BJ (cell line): ENCODE measurements at regions of chr14 and their contacts with region 1.

Region 1: GRCh38 chr14:68816262-68816942 is 23.5 kb upstream of the ZFP36L1 start:
- DNase-seq: no peak
- H3K4me3 ChIP-seq: peak overlapping the region; percentile 41
- H3K27me3 ChIP-seq: no peaks in the 10 kb centered on the region
- CTCF ChIP-seq: peak; percentile 92

Region 2: GRCh38 chr14:67837011-67837624 is 979.3 kb before region 1 on chr14:
- CTCF ChIA-PET with region 1: interaction called, 14 read pairs
- POLR2A ChIA-PET with region 1: no interaction called
- DNase-seq: peak; percentile 29
- H3K4me3 ChIP-seq: no peak overlapping the region
- H3K27me3 ChIP-seq: no peaks in the 10 kb centered on the region
- CTCF ChIP-seq: peak; percentile 55

Region 3: GRCh38 chr14:67883717-67884116 is 932.7 kb before region 1 on chr14:
- CTCF ChIA-PET with region 1: interaction called, 12 read pairs
- POLR2A ChIA-PET with region 1: no interaction called
- DNase-seq: no peak
- H3K4me3 ChIP-seq: no peak overlapping the region
- H3K27me3 ChIP-seq: no peaks in the 10 kb centered on the region
- CTCF ChIP-seq: peak; percentile 13; the same call in 1 of the 2 replicates

Region 4: GRCh38 chr14:67934008-67934481 is 882.4 kb before region 1 on chr14:
- CTCF ChIA-PET with region 1: interaction called, 33 read pairs
- POLR2A ChIA-PET with region 1: no interaction called
- DNase-seq: no peak
- H3K4me3 ChIP-seq: no peak overlapping the region
- H3K27me3 ChIP-seq: no peaks in the 10 kb centered on the region
- CTCF ChIP-seq: peak; percentile 65

Region 5: GRCh38 chr14:67943947-67944346 is 872.5 kb before region 1 on chr14:
- CTCF ChIA-PET with region 1: interaction called, 20 read pairs
- POLR2A ChIA-PET with region 1: no interaction called
- DNase-seq: no peak
- H3K4me3 ChIP-seq: no peak overlapping the region
- H3K27me3 ChIP-seq: no peaks in the 10 kb centered on the region
- CTCF ChIP-seq: peak; percentile 59

Region 6: GRCh38 chr14:68248481-68249255 is 567.7 kb before region 1 on chr14:
- CTCF ChIA-PET with region 1: interaction called, 139 read pairs
- POLR2A ChIA-PET with region 1: no interaction called
- DNase-seq: no peak
- H3K4me3 ChIP-seq: no peak overlapping the region
- H3K27me3 ChIP-seq: no peaks in the 10 kb centered on the region
- CTCF ChIP-seq: peak; percentile 53